ENCODE measurements at regions of chr11 and their contacts with region 1.

Region 1: GRCh38 chr11:44036811-44037657 is 10.7 kb upstream of the ACCSL start:
- DNase-seq: peak; percentile 84 to 92
- H3K4me3 ChIP-seq: no peak overlapping the region
- H3K27ac ChIP-seq: peak overlapping the region; percentile 33 to 58
- H3K4me1 ChIP-seq: peaks cover 7 to 8% of the 10 kb centered on the region in 2 donors
- H3K27me3 ChIP-seq: no peaks in the 10 kb centered on the region
- CTCF ChIP-seq: peak; percentile 86 to 97 (median 92)
- POLR2A ChIP-seq: no peak

Region 2: DNA sequence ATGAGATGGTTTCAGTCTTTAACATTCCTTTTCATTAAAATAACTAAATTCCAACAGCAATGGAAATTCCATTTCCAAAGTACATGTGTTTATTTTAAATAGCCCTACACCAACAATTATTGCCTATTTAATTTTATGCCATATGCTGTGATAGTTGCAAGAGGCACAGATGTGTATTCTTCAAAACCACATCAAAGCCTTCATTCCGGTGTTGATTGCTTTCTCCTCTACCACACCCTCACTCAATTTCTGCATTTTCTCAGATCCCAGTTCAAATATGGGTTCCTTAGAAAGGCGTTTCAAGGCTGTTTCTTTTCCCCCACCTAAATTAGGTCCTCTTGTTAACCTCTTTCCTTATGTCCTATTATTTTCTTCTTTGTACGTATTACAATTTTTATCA is 362.5 kb before region 1 on chr11:
- intact Hi-C with region 1: no loop called
- DNase-seq: no peak
- H3K4me3 ChIP-seq: no peak overlapping the region
- H3K27ac ChIP-seq: no peak overlapping the region
- H3K4me1 ChIP-seq: no peaks in the 10 kb centered on the region
- H3K27me3 ChIP-seq: no peaks in the 10 kb centered on the region
- CTCF ChIP-seq: no peak
- POLR2A ChIP-seq: no peak

Region 3: GRCh38 chr11:43880640-43881159 is 156.3 kb before region 1 on chr11 and contains the start of gene ALKBH3:
- intact Hi-C with region 1: loop called (anchors 5 kb)
- DNase-seq: peak; percentile 88 to 92
- H3K4me3 ChIP-seq: peak within 1 kb of the TSS; percentile 69 to 84
- H3K27ac ChIP-seq: peak within 1 kb of the TSS; percentile 55 to 79
- H3K4me1 ChIP-seq: peaks cover 0 to 5% of the 10 kb centered on the region in 2 donors
- H3K27me3 ChIP-seq: no peaks in the 10 kb centered on the region
- CTCF ChIP-seq: peak in 3 of 4 experiments; percentile 20 to 37 (median 23)
- POLR2A ChIP-seq: peak in 1 of 2 donors; percentile 44
- total RNA-seq, gene ALKBH3: 39.6 to 75.3 (median 55.7) TPM

Region 4: GRCh38 chr11:43944761-43945311 is 92.2 kb before region 1 on chr11:
- intact Hi-C with region 1: loop called (anchors 5 kb)
- DNase-seq: peak; percentile 76 to 78
- H3K4me3 ChIP-seq: peak overlapping the region; percentile 46 to 99
- H3K27ac ChIP-seq: peak overlapping the region; percentile 94 to 99
- H3K4me1 ChIP-seq: peaks cover 0 to 7% of the 10 kb centered on the region in 2 donors
- H3K27me3 ChIP-seq: no peaks in the 10 kb centered on the region
- CTCF ChIP-seq: peak; percentile 72 to 85 (median 79)
- POLR2A ChIP-seq: no peak